Vagina (tissue), 2 donors: ENCODE measurements at regions of chr9 and their contacts with region 1.

Region 1: GRCh38 chr9:111037381-111038305 is 627 bp downstream of the LPAR1 start:
- DNase-seq: no peak
- H3K4me3 ChIP-seq: peak overlapping the region; percentile 66 to 77
- H3K27ac ChIP-seq: peak overlapping the region; percentile 97
- H3K4me1 ChIP-seq: peaks cover 14% of the 10 kb centered on the region
- H3K27me3 ChIP-seq: no peaks in the 10 kb centered on the region
- CTCF ChIP-seq: no peak
- POLR2A ChIP-seq: no peak

Region 2: DNA sequence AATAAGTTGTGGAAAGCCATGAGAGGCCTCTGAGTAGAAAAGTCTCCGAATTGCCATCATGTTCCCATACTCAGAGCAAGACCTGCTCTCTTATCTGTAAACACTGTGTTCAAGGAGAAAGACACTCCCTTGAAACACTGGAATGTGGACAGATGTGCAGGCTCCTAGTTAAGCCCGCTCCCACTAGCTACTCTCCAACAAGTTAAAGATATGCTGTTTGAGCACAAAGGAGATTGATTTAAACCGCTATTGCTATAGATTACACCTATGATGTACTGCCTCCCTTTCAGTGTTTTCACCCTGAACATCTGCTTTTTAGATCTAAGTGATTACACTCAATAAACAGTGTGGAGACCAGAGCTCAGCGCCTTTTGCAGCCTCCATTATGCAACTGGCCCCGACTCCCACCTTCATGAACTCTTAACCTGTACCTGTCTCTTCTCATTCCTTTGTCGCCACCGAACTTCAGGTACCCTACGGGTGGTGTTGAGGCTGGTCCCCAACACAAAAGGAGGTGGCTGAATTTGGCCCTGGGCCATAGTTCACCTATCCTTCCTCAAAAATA is 1965.4 kb before region 1 on chr9:
- intact Hi-C with region 1: no loop called
- DNase-seq: no peak
- H3K4me3 ChIP-seq: no peak overlapping the region
- H3K27ac ChIP-seq: no peak overlapping the region
- H3K4me1 ChIP-seq: no peaks in the 10 kb centered on the region
- H3K27me3 ChIP-seq: no peaks in the 10 kb centered on the region
- CTCF ChIP-seq: no peak
- POLR2A ChIP-seq: no peak

Region 3: DNA sequence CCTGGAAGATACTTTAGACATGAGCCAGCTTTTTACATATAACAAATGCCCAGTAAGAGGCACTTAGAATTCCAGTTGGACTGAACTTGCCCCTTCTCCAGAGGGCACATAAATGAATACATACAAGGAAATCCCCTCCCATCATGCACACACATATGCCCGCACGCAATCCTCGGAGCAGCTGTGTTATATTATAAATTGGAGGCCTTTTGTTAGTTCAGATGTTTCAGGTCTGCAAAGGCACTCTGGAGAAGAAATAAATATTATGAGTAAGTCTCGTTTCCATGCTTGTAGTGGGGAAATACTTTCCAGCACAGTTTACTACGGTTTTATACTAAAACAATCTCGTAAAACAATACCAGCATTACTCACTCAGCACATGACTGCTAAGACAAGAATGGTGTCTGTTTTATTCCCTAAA is 386.6 kb before region 1 on chr9:
- intact Hi-C with region 1: loop called (anchors 5 kb)
- DNase-seq: no peak
- H3K4me3 ChIP-seq: no peak overlapping the region
- H3K27ac ChIP-seq: peak overlapping the region; percentile 51
- H3K4me1 ChIP-seq: peaks cover 9% of the 10 kb centered on the region
- H3K27me3 ChIP-seq: no peaks in the 10 kb centered on the region
- CTCF ChIP-seq: no peak
- POLR2A ChIP-seq: no peak

Region 4: DNA sequence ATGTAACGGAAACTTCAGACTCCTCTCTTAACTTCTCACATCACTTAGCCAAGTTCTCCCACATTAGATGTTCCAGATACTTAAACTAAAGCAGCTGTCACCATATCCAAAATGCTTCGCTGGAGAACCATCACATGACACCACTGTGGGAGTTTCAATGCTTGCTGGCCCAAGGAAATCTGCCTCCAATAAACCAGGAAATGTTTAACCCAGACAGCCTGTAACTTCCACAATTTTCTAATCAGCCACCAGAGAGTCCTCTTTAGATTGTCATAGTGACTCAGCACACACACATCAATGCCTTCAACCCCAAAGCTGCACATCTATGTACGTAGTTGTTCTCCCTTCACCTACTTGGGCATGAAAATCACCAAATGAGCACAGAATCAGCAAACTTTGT is 118.0 kb before region 1 on chr9:
- intact Hi-C with region 1: loop called (anchors 10 kb)
- DNase-seq: no peak
- H3K4me3 ChIP-seq: no peak overlapping the region
- H3K27ac ChIP-seq: peak overlapping the region; percentile 59
- H3K4me1 ChIP-seq: peaks cover 25% of the 10 kb centered on the region
- H3K27me3 ChIP-seq: no peaks in the 10 kb centered on the region
- CTCF ChIP-seq: no peak
- POLR2A ChIP-seq: no peak

Region 5: DNA sequence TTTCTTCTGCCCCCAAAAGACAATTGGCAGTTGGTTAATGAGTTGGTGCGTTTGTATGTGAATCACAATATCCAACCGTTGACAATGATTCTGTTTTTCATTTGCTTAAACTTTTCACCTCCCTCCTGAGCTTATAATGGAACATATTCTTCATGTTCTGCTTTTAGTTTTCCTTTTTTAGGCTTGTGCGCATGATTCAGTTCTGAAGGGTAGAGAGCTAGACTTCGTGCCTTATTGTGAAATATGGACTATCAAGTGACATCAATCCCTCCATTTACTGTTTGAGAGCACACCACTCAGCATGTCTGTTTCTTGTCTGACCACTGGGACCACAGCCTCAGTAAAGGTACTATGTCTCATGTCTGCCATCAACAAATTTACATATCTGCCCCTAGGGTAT is 31.1 kb after region 1 on chr9:
- intact Hi-C with region 1: loop called (anchors 2 kb)
- DNase-seq: no peak
- H3K4me3 ChIP-seq: no peak overlapping the region
- H3K27ac ChIP-seq: peak overlapping the region; percentile 75
- H3K4me1 ChIP-seq: peaks cover 23% of the 10 kb centered on the region
- H3K27me3 ChIP-seq: no peaks in the 10 kb centered on the region
- CTCF ChIP-seq: no peak
- POLR2A ChIP-seq: no peak

Region 6: GRCh38 chr9:111298731-111299598 is 261.3 kb after region 1 on chr9:
- intact Hi-C with region 1: loop called (anchors 10 kb)
- DNase-seq: no peak
- H3K4me3 ChIP-seq: no peak overlapping the region
- H3K27ac ChIP-seq: peak overlapping the region; percentile 48
- H3K4me1 ChIP-seq: peaks cover 9% of the 10 kb centered on the region
- H3K27me3 ChIP-seq: no peaks in the 10 kb centered on the region
- CTCF ChIP-seq: peak; percentile 67 to 87 (median 69)
- POLR2A ChIP-seq: no peak